Activated CD4-positive, alpha-beta T cell treated with anti-CD3 and anti-CD28 coated beads, Interleukin-2, amount 10 ng/mL, durations not matched to agents 24 days and 14 days (primary cell): ENCODE measurements at regions of chr1 and their contacts with region 1.

Region 1: DNA sequence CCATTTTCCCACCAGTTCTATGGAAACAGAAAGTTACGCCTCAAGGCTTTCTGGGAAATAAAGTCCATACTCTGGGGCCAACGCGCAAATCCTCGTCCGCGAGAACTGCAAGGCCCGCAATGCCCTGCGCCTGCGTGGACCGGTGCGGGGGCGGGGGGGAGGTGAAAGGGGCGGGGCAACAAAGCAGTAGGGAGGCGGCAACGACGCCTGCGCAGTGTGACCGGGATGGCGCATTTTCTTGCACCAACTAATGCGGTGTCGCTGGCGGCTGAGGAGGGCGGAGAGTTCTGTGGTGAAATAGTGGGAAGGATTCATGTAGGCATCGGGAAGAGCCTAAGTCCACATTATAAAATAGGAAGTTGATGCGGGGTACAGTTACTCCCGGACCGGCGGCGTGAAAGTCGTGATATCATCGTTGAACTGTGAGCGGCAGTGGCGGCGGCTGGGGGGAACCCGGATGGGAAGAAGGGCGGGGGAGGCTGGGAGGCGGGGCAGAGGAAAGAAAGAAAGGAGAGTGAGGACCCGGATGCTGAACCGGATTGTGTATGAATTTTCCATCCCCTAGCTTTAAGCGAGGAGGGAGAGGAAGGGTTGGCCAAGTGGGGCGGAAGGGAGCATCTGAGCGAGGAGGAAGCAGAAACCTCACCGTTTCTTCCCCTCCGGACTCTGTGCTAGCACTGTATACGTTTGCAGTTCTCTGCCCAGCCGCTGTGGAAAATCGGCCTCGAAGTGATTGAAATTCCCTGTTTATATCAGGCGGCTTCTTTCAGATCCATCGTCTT is at the start of gene GGPS1:
- DNase-seq: peak; percentile 98
- H3K4me3 Mint-ChIP-seq: no peak within 1 kb of the TSS
- H3K27ac Mint-ChIP-seq: no peak within 1 kb of the TSS
- H3K4me1 Mint-ChIP-seq: peaks cover 25% of the 10 kb centered on the region
- H3K27me3 Mint-ChIP-seq: no peaks in the 10 kb centered on the region
- total RNA-seq, gene GGPS1: 30.8 and 33.9 TPM in 2 replicates

Region 2: GRCh38 chr1:234373064-234373958 is 955.2 kb before region 1 on chr1 and contains the start of gene COA6:
- intact Hi-C with region 1: loop called (anchors 5 kb)
- DNase-seq: peak; percentile 96
- H3K4me3 Mint-ChIP-seq: peak within 1 kb of the TSS; percentile 95
- H3K27ac Mint-ChIP-seq: peak within 1 kb of the TSS; percentile 100
- H3K4me1 Mint-ChIP-seq: peaks cover 47% of the 10 kb centered on the region
- H3K27me3 Mint-ChIP-seq: peaks cover 2% of the 10 kb centered on the region
- total RNA-seq, gene COA6: 67.7 and 68.3 TPM in 2 replicates

Region 3: DNA sequence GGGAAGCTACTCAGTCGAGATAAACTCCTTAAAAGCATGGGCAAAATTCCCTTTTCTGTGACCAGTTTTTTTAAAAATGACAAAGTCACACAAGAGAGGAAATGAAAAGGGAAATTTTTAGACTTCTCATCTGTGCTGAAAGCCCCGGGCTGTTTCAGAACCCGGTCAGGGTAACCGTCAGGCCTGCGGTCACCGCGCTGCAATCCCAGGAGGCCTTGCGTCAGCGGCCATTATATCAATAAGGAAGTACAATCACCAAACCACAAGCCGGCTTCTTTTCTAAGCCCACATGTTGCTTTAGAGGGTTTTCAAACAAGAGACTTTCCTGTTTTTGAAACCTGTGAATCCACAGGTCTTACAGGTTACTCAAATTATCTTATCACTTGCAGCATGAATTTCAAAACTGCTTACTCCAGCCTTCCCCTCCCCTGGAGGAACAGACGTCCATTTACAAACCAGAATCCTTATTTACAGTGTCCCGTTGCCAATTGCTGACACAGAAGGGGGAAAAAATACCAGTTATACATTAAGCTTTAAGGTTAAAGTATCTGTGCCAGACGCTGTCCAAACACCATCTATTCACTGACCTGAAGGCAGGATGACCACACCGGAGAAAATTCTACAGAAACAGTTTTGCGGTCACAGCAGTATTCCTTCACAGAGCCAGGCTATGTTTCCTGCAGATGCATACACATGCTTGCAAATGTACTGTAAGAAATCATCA is 365.2 kb before region 1 on chr1:
- intact Hi-C with region 1: loop called (anchors 1 kb)
- DNase-seq: peak; percentile 96
- H3K4me3 Mint-ChIP-seq: peak overlapping the region; percentile 79
- H3K27ac Mint-ChIP-seq: peak overlapping the region; percentile 97
- H3K4me1 Mint-ChIP-seq: peaks cover 69% of the 10 kb centered on the region
- H3K27me3 Mint-ChIP-seq: no peaks in the 10 kb centered on the region

Region 4: GRCh38 chr1:235128456-235129328 is 199.9 kb before region 1 on chr1 and contains the start of gene TOMM20:
- intact Hi-C with region 1: loop called (anchors 1 kb)
- DNase-seq: peak; percentile 98
- H3K4me3 Mint-ChIP-seq: peak within 1 kb of the TSS; percentile 98
- H3K27ac Mint-ChIP-seq: peak within 1 kb of the TSS; percentile 99
- H3K4me1 Mint-ChIP-seq: peaks cover 28% of the 10 kb centered on the region
- H3K27me3 Mint-ChIP-seq: peaks cover 2% of the 10 kb centered on the region
- total RNA-seq, gene TOMM20: 119 and 140 TPM in 2 replicates

Region 5: GRCh38 chr1:235253219-235253962 is 75.2 kb before region 1 on chr1:
- intact Hi-C with region 1: loop called (anchors 1 kb)
- DNase-seq: peak; percentile 88
- H3K4me3 Mint-ChIP-seq: no peak overlapping the region
- H3K27ac Mint-ChIP-seq: no peak overlapping the region
- H3K4me1 Mint-ChIP-seq: peaks cover 21% of the 10 kb centered on the region
- H3K27me3 Mint-ChIP-seq: no peaks in the 10 kb centered on the region

Region 6: GRCh38 chr1:235339746-235340445 is 11.3 kb after region 1 on chr1:
- intact Hi-C with region 1: no loop called
- DNase-seq: no peak
- H3K4me3 Mint-ChIP-seq: no peak overlapping the region
- H3K27ac Mint-ChIP-seq: peak overlapping the region; percentile 21
- H3K4me1 Mint-ChIP-seq: peaks cover 22% of the 10 kb centered on the region
- H3K27me3 Mint-ChIP-seq: no peaks in the 10 kb centered on the region

Region 7: DNA sequence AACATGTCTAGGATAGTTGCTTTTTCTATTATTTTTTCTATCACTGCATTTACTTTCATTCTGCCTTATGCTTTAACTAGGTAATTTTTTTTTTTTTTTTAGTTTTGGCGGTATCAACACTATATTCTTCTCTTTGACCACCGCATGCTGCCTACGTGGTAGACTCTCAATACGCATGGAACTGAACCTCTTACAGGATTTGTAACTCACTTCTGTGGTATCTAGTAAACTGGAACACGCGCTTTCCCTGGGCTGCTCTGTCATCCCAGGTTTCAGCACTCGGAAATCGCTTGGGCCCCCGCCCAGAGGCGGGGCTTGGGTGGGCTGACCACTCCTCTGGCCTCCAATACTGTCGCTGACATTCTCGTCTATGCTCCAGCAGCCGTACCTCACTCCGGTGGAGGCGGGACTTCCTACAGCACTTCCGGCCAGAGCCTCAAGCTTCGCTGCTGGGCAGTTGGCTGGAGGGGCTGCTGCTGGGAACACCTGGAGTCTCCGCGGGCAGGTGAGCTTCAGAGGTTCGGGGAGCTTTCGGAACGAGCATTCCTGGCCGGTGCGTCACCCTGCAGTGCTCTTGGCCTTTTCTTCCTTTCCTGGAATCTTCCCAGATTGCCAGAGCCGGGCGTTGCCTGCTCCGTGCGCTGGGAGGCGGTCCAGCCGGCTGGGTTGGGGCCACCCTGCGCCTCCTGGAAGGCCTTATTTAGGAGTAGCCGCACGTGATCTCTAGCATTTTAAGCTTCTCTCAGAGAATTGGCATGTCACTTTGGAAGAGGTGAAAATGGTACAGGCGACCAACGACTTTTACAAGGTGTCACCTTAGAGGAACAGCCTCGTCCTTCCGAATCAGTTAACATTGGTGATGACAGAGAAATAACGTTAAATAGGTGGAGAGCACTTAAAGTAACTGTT is 38.7 kb after region 1 on chr1 and contains the start of gene TBCE:
- intact Hi-C with region 1: loop called (anchors 1 kb)
- DNase-seq: peak; percentile 97
- H3K4me3 Mint-ChIP-seq: peak within 1 kb of the TSS; percentile 97
- H3K27ac Mint-ChIP-seq: peak within 1 kb of the TSS; percentile 94
- H3K4me1 Mint-ChIP-seq: peaks cover 17% of the 10 kb centered on the region
- H3K27me3 Mint-ChIP-seq: no peaks in the 10 kb centered on the region
- total RNA-seq, gene TBCE: 24.0 and 24.2 TPM in 2 replicates

Region 8: DNA sequence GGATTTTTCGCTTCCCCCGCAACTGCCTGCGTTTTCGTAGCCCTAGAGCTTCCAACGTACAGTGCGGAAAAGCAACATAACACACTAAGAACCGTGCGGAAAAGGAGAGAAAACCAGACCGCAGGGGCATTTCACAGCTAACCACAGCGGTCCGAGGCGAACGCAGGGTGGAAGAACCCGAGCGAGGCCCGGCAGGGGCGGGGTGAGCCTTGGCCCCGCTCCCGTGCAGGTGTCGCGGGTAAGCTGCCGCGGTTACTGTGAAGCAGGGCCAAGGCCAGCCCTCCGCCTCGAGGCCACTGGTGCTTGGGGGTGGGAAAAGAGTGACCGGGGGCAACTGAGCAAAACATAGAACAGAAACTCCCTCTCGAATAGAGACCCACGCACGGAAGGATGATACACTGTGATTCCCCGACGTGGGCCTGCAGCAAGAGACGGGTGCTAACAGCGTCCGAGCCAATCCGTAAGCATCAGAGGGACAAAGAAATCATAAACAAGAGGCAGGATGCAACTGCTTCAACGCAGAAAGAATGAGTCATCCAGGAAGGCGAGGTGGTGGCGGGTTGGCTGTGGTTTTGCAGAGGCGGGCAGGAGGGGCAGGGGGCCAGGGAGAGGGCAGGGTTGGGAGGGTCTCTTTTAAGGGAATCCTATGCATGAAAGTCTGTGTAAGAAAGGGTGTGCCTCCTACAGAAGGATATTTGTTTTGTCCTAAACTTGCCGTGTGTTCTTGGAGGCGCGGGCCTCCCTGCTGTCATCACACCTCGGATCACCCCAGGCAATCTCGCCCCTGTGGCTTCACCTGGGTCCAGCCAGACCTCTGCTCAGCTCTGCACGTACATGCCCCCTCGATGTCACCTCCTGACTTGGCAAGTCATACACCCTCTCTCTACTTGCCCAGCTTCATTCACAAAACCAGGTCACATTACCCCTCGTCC is 313.7 kb after region 1 on chr1:
- intact Hi-C with region 1: loop called (anchors 5 kb)
- DNase-seq: peak; percentile 93
- H3K4me3 Mint-ChIP-seq: peak overlapping the region; percentile 87
- H3K27ac Mint-ChIP-seq: peak overlapping the region; percentile 99
- H3K4me1 Mint-ChIP-seq: peaks cover 64% of the 10 kb centered on the region
- H3K27me3 Mint-ChIP-seq: peaks cover 23% of the 10 kb centered on the region